IMR-90 (cell line): ENCODE measurements at regions of chr3 and their contacts with region 1.

Region 1: GRCh38 chr3:188331166-188331565 is 177.2 kb downstream of the LPP start:
- DNase-seq: no peak
- ATAC-seq: no peak
- H3K4me3 ChIP-seq: no peak overlapping the region
- H3K27ac ChIP-seq: no peak overlapping the region
- H3K4me1 ChIP-seq: peaks cover 3% of the 10 kb centered on the region
- H3K27me3 ChIP-seq: no peaks in the 10 kb centered on the region
- CTCF ChIP-seq: no peak
- POLR2A ChIP-seq: no peak
- RAD21 ChIP-seq: no peak

Region 2: DNA sequence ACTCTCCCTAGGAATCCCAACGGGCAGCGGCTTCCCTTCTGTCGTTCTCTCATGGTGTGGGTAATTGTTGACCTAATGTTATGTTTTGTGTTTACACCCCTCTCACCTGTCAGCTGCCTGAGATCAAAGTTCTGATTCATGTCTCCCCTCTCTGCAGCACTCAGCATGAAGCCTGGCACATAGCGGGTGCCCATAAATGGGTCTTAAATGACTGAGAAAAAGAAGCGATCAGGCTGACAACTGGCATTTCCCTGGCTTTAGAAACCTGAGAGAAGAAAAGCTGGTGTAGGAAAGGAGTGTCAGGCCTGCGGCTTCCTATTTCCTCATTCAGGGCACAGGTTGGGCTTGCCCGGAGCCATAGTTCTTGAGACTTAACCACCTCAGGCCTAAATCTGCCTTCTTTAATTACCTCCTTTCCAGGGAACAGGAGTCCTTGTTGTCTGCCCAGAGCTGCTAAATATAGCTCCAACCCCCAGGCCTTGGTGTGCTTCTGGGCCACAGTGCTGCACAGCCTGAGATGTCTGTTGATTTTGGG is 145.4 kb before region 1 on chr3:
- CTCF ChIA-PET with region 1: no interaction called
- POLR2A ChIA-PET with region 1: no interaction called
- dilution Hi-C with region 1: no loop called
- in situ Hi-C with region 1: no loop called
- intact Hi-C with region 1: no loop called
- DNase-seq: no peak
- ATAC-seq: peak; percentile 60; the same call in 1 of the 2 replicates
- H3K4me3 ChIP-seq: no peak overlapping the region
- H3K27ac ChIP-seq: no peak overlapping the region
- H3K4me1 ChIP-seq: peaks cover 10% of the 10 kb centered on the region
- H3K27me3 ChIP-seq: no peaks in the 10 kb centered on the region
- CTCF ChIP-seq: no peak
- POLR2A ChIP-seq: no peak
- RAD21 ChIP-seq: no peak

Region 3: GRCh38 chr3:188316021-188316722 is 15.0 kb before region 1 on chr3:
- CTCF ChIA-PET with region 1: no interaction called
- POLR2A ChIA-PET with region 1: no interaction called
- dilution Hi-C with region 1: no loop called
- in situ Hi-C with region 1: no loop called
- intact Hi-C with region 1: loop called (anchors 2 kb)
- DNase-seq: no peak
- ATAC-seq: no peak
- H3K4me3 ChIP-seq: no peak overlapping the region
- H3K27ac ChIP-seq: no peak overlapping the region
- H3K4me1 ChIP-seq: peaks cover 18% of the 10 kb centered on the region
- H3K27me3 ChIP-seq: no peaks in the 10 kb centered on the region
- CTCF ChIP-seq: no peak
- POLR2A ChIP-seq: no peak
- RAD21 ChIP-seq: no peak